ENCODE measurements at regions of chr11 and their contacts with region 1.

Region 1: DNA sequence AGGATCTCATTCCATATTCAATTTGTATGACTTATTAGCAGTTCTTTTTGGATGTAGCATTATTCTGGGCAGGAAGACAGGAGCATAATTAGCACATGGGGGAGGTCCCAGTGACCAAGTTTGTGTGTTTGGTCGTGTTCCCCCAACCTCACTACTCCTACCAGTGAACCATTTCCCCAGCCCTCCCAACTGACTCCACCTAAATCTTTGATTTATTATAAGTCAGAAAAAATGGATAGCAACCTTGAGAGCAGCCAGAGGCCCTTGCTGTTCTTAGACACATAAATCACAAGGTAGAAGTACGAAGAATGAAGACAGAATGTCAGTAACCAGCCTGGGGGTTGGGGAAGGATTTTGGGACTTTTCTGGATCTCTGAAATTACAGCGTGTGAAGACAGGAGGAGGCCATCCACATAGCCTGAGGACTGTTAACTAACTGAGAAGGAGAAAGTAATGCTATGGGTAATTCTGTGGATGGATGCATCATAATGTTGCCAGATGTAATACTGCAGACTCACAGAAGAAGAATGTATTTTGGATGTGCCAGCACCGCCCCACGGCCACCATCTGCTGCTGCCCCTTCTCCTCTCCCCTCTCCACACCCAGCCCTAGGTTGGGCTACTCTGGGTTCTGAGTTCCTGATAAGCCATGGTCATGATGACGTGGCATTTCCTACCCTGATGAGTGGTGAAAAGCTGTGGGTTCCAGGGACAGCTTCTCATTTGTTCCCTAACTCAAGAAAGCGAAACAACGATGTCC is 124.3 kb upstream of the TTC12 start:
- DNase-seq: peak; percentile 82 to 89
- H3K4me3 ChIP-seq: peak overlapping the region; percentile 29; the same call in 1 of the 2 replicates
- H3K27ac ChIP-seq: peak overlapping the region; percentile 94
- H3K4me1 ChIP-seq: peaks cover 39% of the 10 kb centered on the region
- H3K27me3 ChIP-seq: no peaks in the 10 kb centered on the region
- CTCF ChIP-seq: no peak

Region 2: GRCh38 chr11:113202431-113202830 is 12.3 kb after region 1 on chr11:
- CTCF ChIA-PET with region 1: no interaction called
- POLR2A ChIA-PET with region 1: no interaction called
- intact Hi-C with region 1: loop called (anchors 1 kb)
- DNase-seq: peak; percentile 76 to 97
- H3K4me3 ChIP-seq: no peak overlapping the region
- H3K27ac ChIP-seq: peak overlapping the region; percentile 86
- H3K4me1 ChIP-seq: peaks cover 55% of the 10 kb centered on the region
- H3K27me3 ChIP-seq: no peaks in the 10 kb centered on the region
- CTCF ChIP-seq: no peak

Region 3: GRCh38 chr11:113261709-113262475 is 71.8 kb after region 1 on chr11:
- CTCF ChIA-PET with region 1: no interaction called
- POLR2A ChIA-PET with region 1: interaction called, 6 read pairs
- intact Hi-C with region 1: loop called (anchors 1 kb)
- DNase-seq: peak in 1 of 2 experiments; percentile 47
- H3K4me3 ChIP-seq: no peak overlapping the region
- H3K27ac ChIP-seq: no peak overlapping the region
- H3K4me1 ChIP-seq: no peaks in the 10 kb centered on the region
- H3K27me3 ChIP-seq: no peaks in the 10 kb centered on the region
- CTCF ChIP-seq: no peak

Measured in PC-9 (cell line).